IMR-90 (cell line): ENCODE measurements at regions of chrX and their contacts with region 1.

Region 1: DNA sequence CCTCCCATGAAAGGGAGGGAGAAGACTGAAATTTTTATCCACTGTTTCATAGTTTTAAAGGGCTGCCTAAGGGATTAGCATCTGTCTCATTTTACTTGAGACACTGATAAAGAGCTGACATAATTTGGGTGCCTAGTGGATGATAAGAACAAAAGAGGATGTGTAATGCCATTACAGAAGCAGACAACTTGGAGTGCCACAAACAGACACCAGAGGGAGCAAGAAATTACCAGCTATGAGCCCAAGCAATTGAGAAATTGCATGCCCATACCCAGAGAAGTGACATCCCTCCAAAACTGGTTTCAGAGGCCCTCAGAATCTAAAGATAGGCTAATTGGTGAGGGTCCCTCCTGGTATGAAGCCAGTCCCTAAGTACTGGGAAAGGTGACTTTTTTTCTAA is 38.5 kb upstream of the POU3F4 start:
- DNase-seq: peak; percentile 1
- ATAC-seq: no peak
- H3K4me3 ChIP-seq: no peak overlapping the region
- H3K27ac ChIP-seq: no peak overlapping the region
- H3K4me1 ChIP-seq: no peaks in the 10 kb centered on the region
- H3K27me3 ChIP-seq: no peaks in the 10 kb centered on the region
- CTCF ChIP-seq: peak; percentile 31; the same call in 1 of the 2 replicates
- POLR2A ChIP-seq: no peak
- RAD21 ChIP-seq: no peak

Region 2: DNA sequence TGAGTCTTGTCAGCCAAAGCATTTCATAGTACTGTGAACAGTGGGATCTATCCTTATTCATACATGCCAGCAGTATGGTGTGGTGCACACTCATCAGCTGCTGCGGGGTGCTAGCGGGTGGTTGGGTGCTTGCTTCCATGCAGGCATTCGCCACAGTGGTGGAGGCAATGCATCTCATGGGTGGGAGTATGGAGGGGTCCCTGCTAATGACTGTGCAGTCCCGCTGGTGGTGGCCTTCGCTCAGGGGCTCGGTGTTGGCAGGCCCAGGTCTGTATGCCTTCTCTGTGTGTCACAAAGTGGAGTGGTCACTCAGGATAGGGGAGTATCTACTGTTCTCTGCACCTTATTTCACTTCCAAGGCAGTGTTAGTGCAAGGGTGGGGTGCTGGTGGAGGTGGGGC is 161.1 kb after region 1 on chrX:
- CTCF ChIA-PET with region 1: no interaction called
- POLR2A ChIA-PET with region 1: no interaction called
- dilution Hi-C with region 1: no loop called
- in situ Hi-C with region 1: no loop called
- intact Hi-C with region 1: loop called (anchors 5 kb)
- DNase-seq: no peak
- ATAC-seq: no peak
- H3K4me3 ChIP-seq: no peak overlapping the region
- H3K27ac ChIP-seq: no peak overlapping the region
- H3K4me1 ChIP-seq: no peaks in the 10 kb centered on the region
- H3K27me3 ChIP-seq: no peaks in the 10 kb centered on the region
- CTCF ChIP-seq: no peak
- POLR2A ChIP-seq: no peak
- RAD21 ChIP-seq: no peak

Region 3: GRCh38 chrX:83845397-83845796 is 375.8 kb after region 1 on chrX:
- CTCF ChIA-PET with region 1: no interaction called
- POLR2A ChIA-PET with region 1: no interaction called
- dilution Hi-C with region 1: no loop called
- in situ Hi-C with region 1: no loop called
- intact Hi-C with region 1: loop called (anchors 5 kb)
- DNase-seq: peak; percentile 22
- ATAC-seq: peak; percentile 80
- H3K4me3 ChIP-seq: no peak overlapping the region
- H3K27ac ChIP-seq: no peak overlapping the region
- H3K4me1 ChIP-seq: no peaks in the 10 kb centered on the region
- H3K27me3 ChIP-seq: no peaks in the 10 kb centered on the region
- CTCF ChIP-seq: peak; percentile 58
- POLR2A ChIP-seq: no peak
- RAD21 ChIP-seq: peak; percentile 35; the same call in 1 of the 2 replicates